ENCODE measurements at regions of chr16 and their contacts with region 1.

Region 1: GRCh38 chr16:74862741-74863244 is 88.2 kb upstream of the FA2H start:
- DNase-seq: peak; percentile 63 to 69
- ATAC-seq: peak; percentile 88 to 89
- H3K4me3 ChIP-seq: no peak overlapping the region
- H3K27ac ChIP-seq: no peak overlapping the region
- H3K4me1 ChIP-seq: no peaks in the 10 kb centered on the region
- CTCF ChIP-seq: peak; percentile 97
- EP300 ChIP-seq: no peak
- POLR2A ChIP-seq: no peak
- RAD21 ChIP-seq: peak; percentile 94 to 98

Region 2: GRCh38 chr16:74695450-74696422 is 167.1 kb before region 1 on chr16:
- CTCF ChIA-PET with region 1: interaction called, 70 read pairs
- POLR2A ChIA-PET with region 1: no interaction called
- DNase-seq: peak; percentile 93 to 98
- ATAC-seq: peak; percentile 94 to 96
- H3K4me3 ChIP-seq: peak overlapping the region; percentile 35
- H3K27ac ChIP-seq: peak overlapping the region; percentile 58 to 77; a peak in 5 of 6 replicates
- H3K4me1 ChIP-seq: peaks cover 23% of the 10 kb centered on the region; the same call in 2 of the 3 replicates
- CTCF ChIP-seq: no peak
- EP300 ChIP-seq: no peak
- POLR2A ChIP-seq: peak; percentile 61
- RAD21 ChIP-seq: no peak

Region 3: GRCh38 chr16:74738134-74738541 is 124.7 kb before region 1 on chr16:
- CTCF ChIA-PET with region 1: interaction called, 43 read pairs
- POLR2A ChIA-PET with region 1: no interaction called
- DNase-seq: peak; percentile 83 to 91
- ATAC-seq: peak; percentile 50 to 64
- H3K4me3 ChIP-seq: no peak overlapping the region
- H3K27ac ChIP-seq: peak overlapping the region; percentile 91
- H3K4me1 ChIP-seq: peaks cover 85% of the 10 kb centered on the region
- CTCF ChIP-seq: no peak
- EP300 ChIP-seq: peak; percentile 15 to 70; a peak in 2 of 5 replicates
- POLR2A ChIP-seq: no peak
- RAD21 ChIP-seq: no peak

Region 4: DNA sequence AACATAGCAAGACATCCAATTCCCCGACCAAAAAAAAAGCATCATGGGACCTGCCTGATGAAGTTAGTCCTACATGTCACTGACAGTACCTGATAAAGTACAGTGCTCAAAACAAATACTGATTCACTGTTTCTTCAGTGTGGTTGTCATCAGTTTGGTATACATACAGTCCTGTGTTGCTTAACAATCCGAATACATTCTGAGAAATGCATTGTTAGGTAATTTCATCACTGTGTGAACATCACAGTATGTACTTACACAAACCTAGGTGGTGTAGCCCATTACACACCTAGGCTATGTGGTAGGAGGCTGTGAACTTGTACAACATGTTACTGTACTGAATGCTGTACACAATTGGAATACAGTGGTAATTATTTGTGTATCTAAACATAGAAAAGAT is 69.2 kb before region 1 on chr16:
- CTCF ChIA-PET with region 1: interaction called, 19 read pairs
- POLR2A ChIA-PET with region 1: no interaction called
- DNase-seq: no peak
- ATAC-seq: peak in 1 of 2 experiments; percentile 13; a peak in 2 of 6 replicates
- H3K4me3 ChIP-seq: no peak overlapping the region
- H3K27ac ChIP-seq: no peak overlapping the region
- H3K4me1 ChIP-seq: no peaks in the 10 kb centered on the region
- CTCF ChIP-seq: no peak
- EP300 ChIP-seq: no peak
- POLR2A ChIP-seq: no peak
- RAD21 ChIP-seq: no peak

Region 5: DNA sequence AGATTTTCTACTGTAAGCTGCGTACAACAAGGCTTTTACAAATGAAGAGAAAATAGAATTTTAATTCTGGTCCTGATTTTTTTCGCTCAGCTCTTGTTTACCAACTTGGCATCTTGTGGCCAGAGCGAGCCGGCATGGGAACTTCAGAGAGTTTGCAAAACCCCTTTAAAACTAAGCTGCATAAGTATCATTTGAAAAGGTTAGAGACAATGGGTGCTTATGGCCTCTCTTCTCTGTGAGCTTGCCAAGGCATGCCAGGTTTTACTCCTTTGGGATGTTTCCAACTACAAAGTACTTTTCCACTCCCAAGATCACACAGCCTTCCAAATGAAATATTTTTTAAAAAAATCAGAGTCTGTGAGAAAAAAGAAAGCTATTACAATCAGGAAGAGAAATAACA is 25.7 kb before region 1 on chr16:
- CTCF ChIA-PET with region 1: interaction called, 25 read pairs
- POLR2A ChIA-PET with region 1: no interaction called
- DNase-seq: no peak
- ATAC-seq: no peak
- H3K4me3 ChIP-seq: no peak overlapping the region
- H3K27ac ChIP-seq: no peak overlapping the region
- H3K4me1 ChIP-seq: peaks cover 7% of the 10 kb centered on the region; the same call in 2 of the 3 replicates
- CTCF ChIP-seq: no peak
- EP300 ChIP-seq: no peak
- POLR2A ChIP-seq: no peak
- RAD21 ChIP-seq: no peak

Region 6: GRCh38 chr16:74886105-74886855 is 23.5 kb after region 1 on chr16:
- CTCF ChIA-PET with region 1: interaction called, 25 read pairs
- POLR2A ChIA-PET with region 1: no interaction called
- DNase-seq: no peak
- ATAC-seq: no peak
- H3K4me3 ChIP-seq: no peak overlapping the region
- H3K27ac ChIP-seq: no peak overlapping the region
- H3K4me1 ChIP-seq: no peaks in the 10 kb centered on the region
- CTCF ChIP-seq: no peak
- EP300 ChIP-seq: no peak
- POLR2A ChIP-seq: no peak
- RAD21 ChIP-seq: no peak